CD4-positive, alpha-beta T cell (primary cell): ENCODE measurements at regions of chr4 and their contacts with region 1.

Region 1: GRCh38 chr4:931960-932712 is at the starts of genes GAK and TMEM175:
- DNase-seq: peak; percentile 91 to 99 (median 96)
- ATAC-seq: peak; percentile 90
- H3K4me3 ChIP-seq: peak within 1 kb of the TSS; percentile 97
- H3K4me3 Mint-ChIP-seq: peak within 1 kb of the TSS; percentile 98
- H3K27ac ChIP-seq: peak within 1 kb of the TSS; percentile 75 to 89
- H3K27ac Mint-ChIP-seq: peak within 1 kb of the TSS; percentile 98
- H3K4me1 ChIP-seq: peaks cover 43% of the 10 kb centered on the region
- H3K4me1 Mint-ChIP-seq: peaks cover 42% of the 10 kb centered on the region
- H3K27me3 ChIP-seq: no peaks in the 10 kb centered on the region
- H3K27me3 Mint-ChIP-seq: no peaks in the 10 kb centered on the region
- CTCF ChIP-seq: no peak
- total RNA-seq, gene GAK: 130 to 131 TPM
- total RNA-seq, gene TMEM175: 51.3 to 57.7 TPM

Region 2: GRCh38 chr4:781493-782216 is 150.5 kb before region 1 on chr4:
- CTCF ChIA-PET with region 1: no interaction called
- POLR2A ChIA-PET with region 1: interaction called, 18 read pairs
- intact Hi-C with region 1: loop called in 1 of 2 experiments (anchors 1 kb)
- DNase-seq: peak; percentile 96 to 99 (median 98)
- ATAC-seq: peak; percentile 91
- H3K4me3 ChIP-seq: peak overlapping the region; percentile 97
- H3K4me3 Mint-ChIP-seq: peak overlapping the region; percentile 97
- H3K27ac ChIP-seq: peak overlapping the region; percentile 80 to 90
- H3K27ac Mint-ChIP-seq: peak overlapping the region; percentile 95
- H3K4me1 ChIP-seq: peaks cover 65% of the 10 kb centered on the region
- H3K4me1 Mint-ChIP-seq: peaks cover 58% of the 10 kb centered on the region
- H3K27me3 ChIP-seq: peaks cover 16 to 32% of the 10 kb centered on the region in 2 experiments
- H3K27me3 Mint-ChIP-seq: peaks cover 23% of the 10 kb centered on the region
- CTCF ChIP-seq: no peak

Region 3: DNA sequence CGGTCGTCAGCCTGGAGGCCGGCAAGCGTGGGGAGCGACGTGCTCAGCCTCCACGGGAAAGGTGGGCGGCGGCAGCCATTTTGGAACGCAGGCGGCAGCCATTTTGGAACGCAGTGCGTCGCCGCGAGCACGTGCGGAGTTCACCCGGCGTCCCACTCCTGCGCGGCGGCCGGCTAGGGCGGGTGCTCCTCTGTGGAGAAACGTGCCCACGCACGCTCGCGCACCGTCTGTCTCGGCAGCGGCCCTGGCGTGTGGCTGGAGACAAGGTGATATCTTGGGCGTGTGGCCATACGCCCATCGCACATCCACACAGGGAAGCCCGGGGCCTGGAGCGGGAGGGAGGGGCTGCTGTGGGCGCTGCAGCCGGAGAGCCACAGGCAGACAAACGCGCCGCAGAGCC is 127.3 kb before region 1 on chr4:
- CTCF ChIA-PET with region 1: no interaction called
- POLR2A ChIA-PET with region 1: no interaction called
- intact Hi-C with region 1: no loop called
- DNase-seq: no peak
- ATAC-seq: no peak
- H3K4me3 ChIP-seq: no peak overlapping the region
- H3K4me3 Mint-ChIP-seq: no peak overlapping the region
- H3K27ac ChIP-seq: no peak overlapping the region
- H3K27ac Mint-ChIP-seq: no peak overlapping the region
- H3K4me1 ChIP-seq: peaks cover 7% of the 10 kb centered on the region
- H3K4me1 Mint-ChIP-seq: no peaks in the 10 kb centered on the region
- H3K27me3 ChIP-seq: peaks cover 0 to 8% of the 10 kb centered on the region in 2 experiments
- H3K27me3 Mint-ChIP-seq: peaks cover 28% of the 10 kb centered on the region
- CTCF ChIP-seq: no peak

Region 4: GRCh38 chr4:973431-974397 is 41.6 kb after region 1 on chr4 and contains the start of gene DGKQ:
- CTCF ChIA-PET with region 1: no interaction called
- POLR2A ChIA-PET with region 1: interaction called, 7 read pairs
- intact Hi-C with region 1: loop called (anchors 1 kb)
- DNase-seq: peak; percentile 78 to 96 (median 90)
- ATAC-seq: peak; percentile 94
- H3K4me3 ChIP-seq: peak within 1 kb of the TSS; percentile 63
- H3K4me3 Mint-ChIP-seq: peak within 1 kb of the TSS; percentile 60
- H3K27ac ChIP-seq: no peak within 1 kb of the TSS
- H3K27ac Mint-ChIP-seq: no peak within 1 kb of the TSS
- H3K4me1 ChIP-seq: peaks cover 32% of the 10 kb centered on the region
- H3K4me1 Mint-ChIP-seq: no peaks in the 10 kb centered on the region
- H3K27me3 ChIP-seq: no peaks in the 10 kb centered on the region
- H3K27me3 Mint-ChIP-seq: no peaks in the 10 kb centered on the region
- CTCF ChIP-seq: no peak
- total RNA-seq, gene DGKQ: 17.6 to 19.2 TPM

Region 5: DNA sequence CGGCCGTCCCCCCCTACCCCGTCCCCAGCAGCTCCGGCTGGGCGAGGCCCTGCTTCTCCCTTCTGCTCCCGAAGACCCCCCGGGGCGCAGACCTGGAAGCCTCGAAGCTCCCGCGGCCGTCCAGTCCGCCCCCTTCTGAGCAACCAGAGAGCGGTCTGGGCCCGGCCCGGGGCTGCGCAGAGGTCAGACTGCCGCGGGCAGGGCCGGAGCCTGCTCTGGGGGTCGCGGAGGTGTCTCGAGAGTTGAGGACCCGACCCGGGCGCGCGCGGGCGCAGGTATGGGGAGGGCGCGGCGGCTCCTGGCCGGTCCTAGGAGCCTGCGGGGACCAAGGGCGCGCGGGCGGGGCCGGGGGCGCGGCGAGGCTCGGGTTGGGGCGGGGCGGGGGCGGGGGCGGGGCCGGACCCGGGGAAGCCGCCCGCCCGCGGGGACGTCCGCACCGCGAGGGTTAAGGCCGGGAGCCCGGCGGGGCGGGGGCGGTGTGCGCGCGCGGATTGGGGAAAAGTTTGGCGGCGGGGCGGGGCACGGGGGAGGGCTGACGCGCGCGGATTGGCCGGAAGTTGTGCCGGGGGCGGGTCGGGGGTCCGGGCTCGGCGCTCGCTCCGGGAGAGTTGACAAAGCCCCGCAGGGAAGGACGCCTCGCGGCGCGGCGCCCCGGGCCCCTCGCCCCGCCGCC is 79.0 kb after region 1 on chr4 and contains the start of gene FGFRL1:
- CTCF ChIA-PET with region 1: no interaction called
- POLR2A ChIA-PET with region 1: interaction called, 10 read pairs
- intact Hi-C with region 1: loop called in 1 of 2 experiments (anchors 5 kb)
- DNase-seq: peak; percentile 84 to 97 (median 93)
- ATAC-seq: peak; percentile 58
- H3K4me3 ChIP-seq: peak within 1 kb of the TSS; percentile 66
- H3K4me3 Mint-ChIP-seq: peak within 1 kb of the TSS; percentile 91
- H3K27ac ChIP-seq: peak within 1 kb of the TSS; percentile 60 to 62
- H3K27ac Mint-ChIP-seq: peak within 1 kb of the TSS; percentile 97
- H3K4me1 ChIP-seq: peaks cover 31% of the 10 kb centered on the region
- H3K4me1 Mint-ChIP-seq: peaks cover 14% of the 10 kb centered on the region
- H3K27me3 ChIP-seq: peaks cover 13 to 19% of the 10 kb centered on the region in 2 experiments
- H3K27me3 Mint-ChIP-seq: peaks cover 37% of the 10 kb centered on the region
- CTCF ChIP-seq: no peak
- total RNA-seq, gene FGFRL1: 21.8 to 25.0 TPM

Region 6: DNA sequence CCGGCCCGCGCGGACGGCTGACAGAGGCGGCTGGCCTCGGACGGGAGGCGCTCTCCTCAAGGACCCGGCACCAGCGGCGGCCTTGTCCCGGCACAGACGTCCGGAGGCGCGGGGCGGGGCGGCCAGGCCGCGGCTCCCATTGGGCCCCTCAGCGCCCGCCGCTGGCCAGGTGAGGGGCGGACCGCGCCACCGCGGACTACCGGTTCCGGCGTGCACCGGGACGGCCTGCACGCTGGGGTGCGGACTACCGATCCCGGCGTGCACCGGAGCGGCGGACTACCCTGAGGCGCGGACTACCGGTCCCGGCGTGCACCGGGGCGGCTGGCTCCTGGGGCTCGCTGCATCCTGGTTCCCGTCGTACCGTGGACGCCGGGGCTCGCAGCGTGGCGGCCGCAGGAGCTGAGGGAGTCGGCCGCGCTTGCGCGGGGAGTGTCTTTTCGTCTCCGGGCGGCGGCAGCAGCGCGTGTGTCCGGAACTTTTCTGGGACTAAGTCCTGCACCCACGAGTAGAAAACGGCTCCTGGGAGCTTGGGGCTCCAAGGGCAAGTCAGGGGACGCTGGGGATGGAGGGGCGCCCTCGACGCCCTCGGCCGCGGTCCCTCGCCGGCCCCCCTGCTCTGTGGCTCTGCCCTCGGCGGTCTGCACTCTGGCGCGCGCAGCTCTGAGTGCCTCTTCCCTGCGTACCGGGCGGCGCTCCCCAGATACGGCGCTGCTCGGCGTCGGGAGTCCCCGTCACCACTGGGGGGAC is 924.1 kb after region 1 on chr4 and contains the start of gene LETM1:
- CTCF ChIA-PET with region 1: no interaction called
- POLR2A ChIA-PET with region 1: no interaction called
- intact Hi-C with region 1: loop called in 1 of 2 experiments (anchors 10 kb)
- DNase-seq: peak; percentile 81 to 97 (median 91)
- ATAC-seq: peak; percentile 97
- H3K4me3 ChIP-seq: peak within 1 kb of the TSS; percentile 75
- H3K4me3 Mint-ChIP-seq: peak within 1 kb of the TSS; percentile 94
- H3K27ac ChIP-seq: peak within 1 kb of the TSS in 1 of 2 donors; percentile 5
- H3K27ac Mint-ChIP-seq: peak within 1 kb of the TSS; percentile 76
- H3K4me1 ChIP-seq: peaks cover 32% of the 10 kb centered on the region
- H3K4me1 Mint-ChIP-seq: peaks cover 40% of the 10 kb centered on the region
- H3K27me3 ChIP-seq: no peaks in the 10 kb centered on the region
- H3K27me3 Mint-ChIP-seq: no peaks in the 10 kb centered on the region
- CTCF ChIP-seq: no peak
- total RNA-seq, gene LETM1: 21.2 to 25.2 TPM

Region 7: GRCh38 chr4:2341261-2341841 is 1409.2 kb after region 1 on chr4:
- CTCF ChIA-PET with region 1: no interaction called
- POLR2A ChIA-PET with region 1: no interaction called
- intact Hi-C with region 1: no loop called
- DNase-seq: peak in 1 of 14 experiments; percentile 29
- ATAC-seq: no peak
- H3K4me3 ChIP-seq: no peak overlapping the region
- H3K4me3 Mint-ChIP-seq: no peak overlapping the region
- H3K27ac ChIP-seq: no peak overlapping the region
- H3K27ac Mint-ChIP-seq: no peak overlapping the region
- H3K4me1 ChIP-seq: no peaks in the 10 kb centered on the region
- H3K4me1 Mint-ChIP-seq: no peaks in the 10 kb centered on the region
- H3K27me3 ChIP-seq: no peaks in the 10 kb centered on the region
- H3K27me3 Mint-ChIP-seq: no peaks in the 10 kb centered on the region
- CTCF ChIP-seq: no peak